Right ventricle myocardium inferior (tissue), 1 donor: ENCODE measurements at regions of chr7 and their contacts with region 1.

Region 1: DNA sequence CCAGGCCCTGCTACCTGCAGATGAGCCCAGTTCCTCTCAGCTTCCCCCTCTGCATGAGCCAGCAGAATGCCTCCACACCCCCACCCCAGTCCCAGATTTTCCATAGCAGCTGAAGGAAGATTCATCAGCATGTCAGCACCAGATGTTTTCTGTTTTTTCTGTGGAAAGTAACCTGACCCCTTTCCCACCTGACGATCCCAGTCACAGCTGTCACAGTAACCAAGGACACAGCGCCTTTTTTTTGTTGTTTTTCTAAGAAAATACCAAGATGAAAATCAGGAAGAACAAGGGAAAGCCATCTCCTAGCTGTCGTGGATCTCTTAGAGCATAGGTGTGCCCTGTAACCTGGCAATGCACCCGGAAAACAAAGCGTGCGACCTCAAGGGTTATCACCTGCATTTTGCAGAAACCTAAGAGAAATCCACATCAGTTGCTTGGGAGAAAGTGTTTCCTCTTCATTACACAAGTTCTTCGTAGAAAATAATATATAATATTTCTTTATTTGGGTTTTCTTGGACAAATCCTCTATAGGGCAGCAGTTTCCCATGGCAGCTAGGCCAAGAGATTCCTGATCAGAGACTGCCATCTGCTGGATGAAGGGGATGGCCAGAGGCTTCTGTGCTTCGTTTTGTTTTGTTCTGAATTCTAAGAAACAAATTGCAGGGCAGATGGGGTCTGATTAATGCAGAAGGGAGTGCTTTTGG is 401.9 kb downstream of the TNS3 start:
- DNase-seq: no peak
- ATAC-seq: no peak

Region 2: GRCh38 chr7:45917658-45918057 is 1262.3 kb before region 1 on chr7:
- intact Hi-C with region 1: loop called (anchors 1 kb)
- DNase-seq: peak; percentile 88
- ATAC-seq: peak; percentile 18

Region 3: DNA sequence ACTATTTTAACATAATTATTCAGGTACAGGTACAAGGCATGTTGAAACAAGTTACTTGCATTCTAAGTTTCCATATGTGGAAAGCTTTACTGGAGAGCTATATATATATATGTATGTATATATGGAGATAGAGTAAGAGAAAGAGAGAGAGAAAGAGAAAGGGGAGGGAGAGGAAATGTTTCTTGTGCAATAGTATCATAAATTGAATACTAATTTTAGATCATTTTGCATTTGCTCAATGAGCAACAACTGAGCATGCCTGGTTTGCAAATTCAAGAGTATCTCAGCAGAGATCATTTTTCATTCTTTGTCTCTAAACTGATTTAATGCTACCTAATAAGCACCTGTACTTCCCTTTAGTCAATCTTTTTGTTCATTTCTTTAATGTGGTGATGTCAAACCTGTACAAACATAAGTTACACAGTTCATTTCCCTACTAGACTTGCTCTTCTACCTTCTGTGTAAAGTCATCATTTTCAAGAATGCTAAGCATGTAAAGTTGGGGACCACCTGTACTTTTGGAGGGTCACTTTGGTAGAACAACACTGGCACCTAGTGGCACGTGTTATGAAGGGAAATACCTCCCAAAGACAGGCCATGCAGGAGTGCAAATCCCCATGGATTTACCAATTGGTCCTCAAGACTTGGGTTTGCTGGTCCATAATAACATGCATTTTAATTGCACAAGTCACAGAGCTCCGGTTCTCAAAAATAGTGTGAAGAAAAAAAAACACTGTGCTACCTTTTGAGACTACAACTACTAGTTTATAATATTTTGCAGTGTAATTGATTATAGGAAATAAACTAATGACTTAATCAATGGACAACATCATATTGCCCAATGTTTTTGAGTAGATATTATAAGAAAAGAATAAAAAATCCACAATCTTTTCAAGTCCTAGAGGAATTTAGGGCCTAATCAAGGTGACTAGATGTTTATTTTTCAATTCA is 827.7 kb before region 1 on chr7:
- intact Hi-C with region 1: loop called (anchors 5 kb)
- DNase-seq: no peak
- ATAC-seq: no peak

Region 4: DNA sequence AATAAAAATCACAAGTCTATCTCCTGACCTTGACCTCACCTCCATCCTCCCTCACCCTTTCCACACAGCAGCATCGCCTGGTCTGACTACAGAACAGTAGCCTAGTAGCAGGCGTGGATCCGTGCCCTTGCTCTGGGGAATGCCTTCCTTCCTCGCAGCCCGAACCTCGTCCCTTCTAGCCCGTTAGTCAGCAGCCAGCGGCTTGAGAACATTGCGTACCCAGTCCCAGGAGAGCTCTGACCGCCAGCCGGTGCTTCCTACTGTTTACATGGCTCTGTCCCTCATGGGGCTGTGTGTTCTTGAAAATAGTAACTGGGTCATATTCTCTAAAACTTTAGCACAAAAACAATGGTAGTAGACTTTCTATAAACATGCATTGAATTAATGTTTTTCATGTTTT is 576.2 kb before region 1 on chr7:
- intact Hi-C with region 1: loop called (anchors 10 kb)
- DNase-seq: peak; percentile 94
- ATAC-seq: peak; percentile 92

Region 5: GRCh38 chr7:46764100-46764936 is 415.6 kb before region 1 on chr7:
- intact Hi-C with region 1: no loop called
- DNase-seq: no peak
- ATAC-seq: peak; percentile 56

Region 6: DNA sequence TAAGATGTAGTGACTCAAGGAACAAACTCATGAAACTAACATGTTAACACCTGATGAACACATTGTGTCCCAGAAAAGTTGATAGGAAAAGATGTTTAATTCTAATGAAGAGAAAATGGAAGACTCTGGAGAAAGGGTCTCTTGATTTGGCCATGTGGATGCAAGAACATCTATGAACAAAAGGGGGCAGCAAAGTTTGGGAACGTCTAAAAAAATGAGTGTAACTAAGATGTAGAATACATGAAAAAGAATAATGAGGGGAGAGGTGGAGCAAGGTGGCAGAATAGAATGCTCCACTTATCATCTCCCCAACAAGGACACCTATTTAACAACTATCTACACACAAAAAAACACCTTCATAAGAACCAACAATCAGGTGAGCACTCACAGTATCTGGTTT is 403.2 kb before region 1 on chr7:
- intact Hi-C with region 1: loop called (anchors 2 kb)
- DNase-seq: no peak
- ATAC-seq: no peak

Region 7: GRCh38 chr7:47232751-47233412 is 52.9 kb after region 1 on chr7:
- intact Hi-C with region 1: loop called (anchors 5 kb)
- DNase-seq: no peak
- ATAC-seq: peak; percentile 41

Region 8: GRCh38 chr7:47254081-47255006 is 74.4 kb after region 1 on chr7:
- intact Hi-C with region 1: loop called (anchors 2 kb)
- DNase-seq: peak; percentile 94
- ATAC-seq: peak; percentile 95

Region 9: DNA sequence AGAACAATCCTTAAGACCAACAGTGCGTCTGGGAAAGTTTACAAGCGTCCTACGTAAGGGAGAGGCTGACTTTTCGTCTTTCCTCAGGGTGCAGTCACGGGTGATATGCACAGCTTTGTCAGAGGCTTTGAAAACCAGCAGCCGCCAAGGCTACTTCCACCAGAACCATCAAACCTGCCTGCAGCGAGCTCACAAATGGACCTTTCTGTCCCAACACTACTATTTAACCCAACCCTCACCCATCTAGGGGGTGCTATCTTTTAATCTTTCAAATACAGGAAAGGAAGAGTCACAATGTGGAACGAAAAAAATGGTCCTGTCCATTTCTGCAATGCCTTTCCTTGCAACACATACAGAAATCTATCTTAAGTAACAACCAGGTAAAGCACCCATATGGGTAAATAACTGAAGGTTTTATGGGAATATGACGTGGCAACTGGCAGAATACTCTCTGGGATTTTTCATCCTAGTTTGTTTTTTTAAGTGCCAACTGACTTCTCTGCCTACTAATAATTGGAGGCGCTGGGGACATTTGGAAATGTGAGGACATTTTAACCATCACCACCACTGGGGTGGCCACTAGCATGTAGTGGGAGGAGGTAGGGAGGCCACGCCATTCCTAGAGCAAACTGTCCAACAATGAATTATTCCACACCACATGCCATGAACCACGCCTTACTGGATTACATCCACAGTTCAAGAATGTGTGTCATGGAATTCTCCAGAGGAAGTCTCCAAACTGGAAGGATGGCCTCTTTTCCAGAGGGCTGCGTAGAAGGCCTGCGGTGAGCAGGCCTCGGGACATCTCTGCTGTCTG is 377.4 kb after region 1 on chr7:
- intact Hi-C with region 1: no loop called
- DNase-seq: no peak
- ATAC-seq: peak; percentile 67